ENCODE measurements at regions of chr20 and their contacts with region 1.

Region 1: DNA sequence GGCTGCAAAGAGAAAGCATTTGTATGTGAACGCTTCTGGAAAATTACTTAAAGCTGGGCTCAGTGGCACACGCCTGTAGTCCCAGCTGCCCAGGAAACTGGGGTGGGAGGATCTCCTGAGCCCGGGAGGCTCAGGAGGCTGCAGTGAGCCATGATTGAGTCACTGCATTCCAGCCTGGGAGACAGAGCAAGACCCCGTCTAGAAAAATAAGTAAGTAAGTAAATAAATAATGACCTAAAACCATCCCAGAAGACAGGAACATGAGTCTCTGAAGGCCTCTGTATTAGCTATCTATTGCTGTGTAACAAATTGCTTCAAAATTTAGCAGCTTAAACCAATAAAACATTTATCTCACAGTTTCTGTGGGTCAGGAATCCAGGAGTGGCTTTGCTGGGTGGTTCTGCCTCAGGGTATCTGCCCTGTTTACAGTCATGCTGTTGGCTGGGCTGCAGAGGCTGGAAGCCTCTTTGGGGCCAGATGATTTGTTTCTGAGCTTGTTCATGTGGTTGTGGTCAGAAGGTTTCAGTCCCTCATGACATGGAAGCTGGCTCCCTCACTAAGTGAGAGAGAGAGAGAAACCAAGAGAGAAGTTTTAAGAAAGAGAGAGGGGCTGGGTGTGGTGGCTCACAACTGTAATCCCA is 48.4 kb upstream of the NCOA3 start:
- DNase-seq: peak; percentile 74
- ATAC-seq: peak; percentile 84
- H3K4me3 Mint-ChIP-seq: no peak overlapping the region
- H3K27ac Mint-ChIP-seq: peak overlapping the region; percentile 73
- H3K4me1 Mint-ChIP-seq: peaks cover 38% of the 10 kb centered on the region
- H3K27me3 Mint-ChIP-seq: no peaks in the 10 kb centered on the region

Region 2: GRCh38 chr20:47196091-47197081 is 256.9 kb before region 1 on chr20:
- CTCF ChIA-PET with region 1: no interaction called
- POLR2A ChIA-PET with region 1: no interaction called
- intact Hi-C with region 1: loop called in 1 of 2 experiments (anchors 5 kb)
- DNase-seq: peak; percentile 91
- ATAC-seq: peak; percentile 57
- H3K4me3 Mint-ChIP-seq: no peak overlapping the region
- H3K27ac Mint-ChIP-seq: no peak overlapping the region
- H3K4me1 Mint-ChIP-seq: peaks cover 16% of the 10 kb centered on the region
- H3K27me3 Mint-ChIP-seq: peaks cover 8% of the 10 kb centered on the region

Region 3: GRCh38 chr20:47468290-47469050 is 15.2 kb after region 1 on chr20:
- CTCF ChIA-PET with region 1: interaction called, 3 read pairs
- POLR2A ChIA-PET with region 1: interaction called, 5 read pairs
- intact Hi-C with region 1: loop called in 1 of 2 experiments (anchors 2 kb)
- DNase-seq: no peak
- ATAC-seq: no peak
- H3K4me3 Mint-ChIP-seq: no peak overlapping the region
- H3K27ac Mint-ChIP-seq: no peak overlapping the region
- H3K4me1 Mint-ChIP-seq: peaks cover 4% of the 10 kb centered on the region
- H3K27me3 Mint-ChIP-seq: no peaks in the 10 kb centered on the region

Region 4: GRCh38 chr20:47515843-47516242 is 62.6 kb after region 1 on chr20:
- CTCF ChIA-PET with region 1: interaction called, 3 read pairs
- POLR2A ChIA-PET with region 1: no interaction called
- intact Hi-C with region 1: loop called in 1 of 2 experiments (anchors 1 kb)
- DNase-seq: no peak
- ATAC-seq: peak; percentile 88
- H3K4me3 Mint-ChIP-seq: peak overlapping the region; percentile 5
- H3K27ac Mint-ChIP-seq: peak overlapping the region; percentile 89
- H3K4me1 Mint-ChIP-seq: peaks cover 65% of the 10 kb centered on the region
- H3K27me3 Mint-ChIP-seq: no peaks in the 10 kb centered on the region

Region 5: GRCh38 chr20:47682028-47682783 is 228.9 kb after region 1 on chr20:
- CTCF ChIA-PET with region 1: no interaction called
- POLR2A ChIA-PET with region 1: no interaction called
- intact Hi-C with region 1: no loop called
- DNase-seq: no peak
- ATAC-seq: no peak
- H3K4me3 Mint-ChIP-seq: no peak overlapping the region
- H3K27ac Mint-ChIP-seq: no peak overlapping the region
- H3K4me1 Mint-ChIP-seq: no peaks in the 10 kb centered on the region
- H3K27me3 Mint-ChIP-seq: no peaks in the 10 kb centered on the region